PC-9 (cell line): ENCODE measurements at regions of chr10 and their contacts with region 1.

Region 1: GRCh38 chr10:52451817-52452216 is 137.7 kb downstream of the DKK1 start:
- DNase-seq: peak; percentile 25 to 98
- H3K4me3 ChIP-seq: no peak overlapping the region
- H3K27ac ChIP-seq: peak overlapping the region; percentile 77
- H3K4me1 ChIP-seq: peaks cover 45% of the 10 kb centered on the region
- H3K27me3 ChIP-seq: no peaks in the 10 kb centered on the region
- CTCF ChIP-seq: no peak

Region 2: DNA sequence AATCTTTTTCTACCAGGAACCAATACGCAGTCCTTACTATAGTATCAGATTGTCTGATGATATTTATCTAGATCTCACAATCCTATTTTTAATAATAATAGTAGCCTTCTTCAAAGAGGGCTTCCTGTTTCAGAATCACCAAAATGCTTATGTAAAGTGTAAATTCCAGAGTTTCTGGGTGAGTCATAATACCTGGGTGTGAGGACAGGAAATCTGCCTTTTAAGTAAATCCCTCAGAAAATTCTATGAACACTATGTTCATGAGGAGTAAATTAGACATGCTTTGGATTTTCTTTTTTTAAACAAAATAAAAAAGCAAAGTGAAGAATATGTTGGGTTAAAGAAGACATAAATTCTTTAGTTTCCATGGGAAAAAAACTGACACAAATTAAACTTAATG is 117.2 kb before region 1 on chr10:
- CTCF ChIA-PET with region 1: interaction called, 4 read pairs
- POLR2A ChIA-PET with region 1: no interaction called
- intact Hi-C with region 1: loop called (anchors 5 kb)
- DNase-seq: peak in 1 of 2 experiments; percentile 48
- H3K4me3 ChIP-seq: no peak overlapping the region
- H3K27ac ChIP-seq: peak overlapping the region; percentile 49
- H3K4me1 ChIP-seq: peaks cover 16% of the 10 kb centered on the region
- H3K27me3 ChIP-seq: no peaks in the 10 kb centered on the region
- CTCF ChIP-seq: no peak

Region 3: GRCh38 chr10:52387744-52388143 is 64.1 kb before region 1 on chr10:
- CTCF ChIA-PET with region 1: no interaction called
- POLR2A ChIA-PET with region 1: interaction called, 4 read pairs
- intact Hi-C with region 1: loop called (anchors 5 kb)
- DNase-seq: peak; percentile 66 to 77
- H3K4me3 ChIP-seq: no peak overlapping the region
- H3K27ac ChIP-seq: no peak overlapping the region
- H3K4me1 ChIP-seq: peaks cover 10% of the 10 kb centered on the region
- H3K27me3 ChIP-seq: no peaks in the 10 kb centered on the region
- CTCF ChIP-seq: no peak

Region 4: DNA sequence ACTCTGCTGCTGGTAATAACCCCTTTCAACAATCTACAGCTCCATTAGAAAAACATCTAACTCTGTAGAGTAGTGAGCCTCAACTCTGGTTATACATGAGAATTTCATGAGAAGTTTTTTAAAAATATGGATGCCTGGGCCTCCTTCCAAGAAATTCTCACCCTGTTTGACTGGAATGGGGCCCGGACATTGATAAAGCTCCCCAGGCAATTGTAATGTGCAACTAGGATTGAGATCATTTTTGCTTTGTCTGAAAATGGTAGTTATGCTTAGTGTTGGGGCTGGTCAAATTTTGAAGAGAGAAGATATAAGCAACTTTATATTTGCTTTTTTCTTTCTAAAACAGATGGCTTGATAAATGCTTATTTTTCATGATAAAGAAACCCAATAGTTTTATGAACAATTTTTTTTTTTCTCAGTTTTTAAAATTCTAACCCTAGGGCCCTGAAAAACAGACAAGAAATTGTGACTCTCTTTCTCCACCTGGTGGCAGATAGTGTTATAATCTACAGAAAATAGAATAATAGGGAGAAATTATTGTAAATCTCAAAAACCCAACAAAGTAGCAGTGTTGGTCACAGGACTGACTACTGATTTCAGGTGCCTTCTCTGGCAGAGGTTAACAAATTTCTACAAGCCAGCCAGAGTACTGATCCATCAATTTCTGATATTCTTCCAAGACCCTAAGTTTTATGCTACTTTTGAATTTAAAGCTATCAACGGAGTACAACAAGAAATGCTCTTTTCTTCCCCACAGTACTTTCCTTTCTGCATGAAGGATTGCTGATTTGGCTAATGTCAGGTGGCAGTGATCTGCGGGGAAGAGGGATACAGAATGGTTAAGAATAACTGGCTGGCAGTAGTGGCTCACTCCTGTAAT is 37.0 kb after region 1 on chr10:
- CTCF ChIA-PET with region 1: interaction called, 7 read pairs
- POLR2A ChIA-PET with region 1: no interaction called
- intact Hi-C with region 1: loop called (anchors 2 kb)
- DNase-seq: peak in 1 of 2 experiments; percentile 10
- H3K4me3 ChIP-seq: no peak overlapping the region
- H3K27ac ChIP-seq: no peak overlapping the region
- H3K4me1 ChIP-seq: peaks cover 23% of the 10 kb centered on the region
- H3K27me3 ChIP-seq: no peaks in the 10 kb centered on the region
- CTCF ChIP-seq: peak; percentile 92

Region 5: DNA sequence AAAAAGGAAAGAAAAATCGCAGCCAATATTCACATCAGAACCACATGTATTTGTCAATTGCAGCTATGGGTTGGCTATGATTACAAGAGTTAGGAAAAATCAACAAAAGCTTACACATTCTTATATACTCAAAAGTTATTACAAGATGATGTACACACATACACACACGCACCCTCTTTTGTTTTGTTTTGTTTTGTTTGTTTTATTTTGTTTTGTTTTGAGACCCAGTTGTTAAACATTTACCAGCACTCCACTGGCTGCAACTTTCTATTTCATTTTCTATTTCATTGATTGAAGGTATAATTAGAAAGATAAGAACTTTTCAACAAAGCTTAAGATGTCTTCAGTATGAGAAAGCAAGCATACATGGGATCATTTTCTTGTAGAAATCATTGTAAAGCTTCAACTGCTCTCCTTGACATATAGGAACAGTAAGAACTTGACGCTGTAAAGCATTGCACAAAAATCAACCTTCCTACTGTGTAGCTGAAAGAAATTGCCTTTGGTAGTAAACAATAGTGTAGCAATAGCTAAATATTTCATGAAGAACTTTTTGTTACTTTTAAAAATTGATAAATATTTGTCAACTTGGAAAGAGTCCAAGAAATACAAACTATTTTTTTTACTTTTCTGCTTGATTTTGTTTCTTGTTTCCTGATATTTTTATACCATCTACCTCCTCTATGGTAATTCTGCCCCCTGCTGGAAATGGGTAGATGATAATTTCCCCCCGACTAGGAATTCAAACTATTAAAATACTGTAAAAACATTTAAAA is 114.8 kb after region 1 on chr10:
- CTCF ChIA-PET with region 1: no interaction called
- POLR2A ChIA-PET with region 1: no interaction called
- intact Hi-C with region 1: loop called (anchors 5 kb)
- DNase-seq: peak; percentile 25 to 60
- H3K4me3 ChIP-seq: no peak overlapping the region
- H3K27ac ChIP-seq: no peak overlapping the region
- H3K4me1 ChIP-seq: peaks cover 7% of the 10 kb centered on the region
- H3K27me3 ChIP-seq: no peaks in the 10 kb centered on the region
- CTCF ChIP-seq: peak; percentile 78

Region 6: DNA sequence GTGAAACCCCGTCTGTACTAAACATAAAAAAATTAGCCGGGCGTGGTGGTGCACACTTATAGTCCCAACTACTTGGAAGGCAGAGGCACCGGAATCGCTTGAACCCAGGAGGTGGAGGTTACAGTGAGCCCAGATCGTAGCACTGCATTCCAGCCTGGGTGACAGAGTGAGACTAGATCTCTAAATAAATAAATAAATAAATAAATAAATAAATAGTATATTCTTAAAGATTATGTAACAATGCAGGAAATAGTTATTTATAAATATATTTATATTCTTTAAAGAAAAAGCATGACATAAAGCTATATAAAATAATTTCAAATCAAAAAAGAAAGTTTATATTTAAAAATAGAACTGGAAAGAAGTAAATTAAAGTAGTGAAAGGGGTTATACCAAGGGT is 244.4 kb after region 1 on chr10:
- CTCF ChIA-PET with region 1: no interaction called
- POLR2A ChIA-PET with region 1: no interaction called
- intact Hi-C with region 1: no loop called
- DNase-seq: no peak
- H3K4me3 ChIP-seq: no peak overlapping the region
- H3K27ac ChIP-seq: no peak overlapping the region
- H3K4me1 ChIP-seq: no peaks in the 10 kb centered on the region
- H3K27me3 ChIP-seq: no peaks in the 10 kb centered on the region
- CTCF ChIP-seq: no peak